ENCODE measurements at regions of chr19 and their contacts with region 1.

Region 1: GRCh38 chr19:49127674-49128544 is 8.6 kb downstream of the PPFIA3 start:
- DNase-seq: peak; percentile 91 to 95 (median 94)
- H3K4me3 ChIP-seq: peak overlapping the region; percentile 73
- H3K4me3 Mint-ChIP-seq: peak overlapping the region; percentile 64 to 93 (median 91)
- H3K27ac ChIP-seq: peak overlapping the region; percentile 59
- H3K27ac Mint-ChIP-seq: peak overlapping the region in 7 of 8 donors; percentile 8 to 92 (median 89)
- H3K4me1 ChIP-seq: peaks cover 12% of the 10 kb centered on the region
- H3K4me1 Mint-ChIP-seq: peaks cover 11 to 19% (median 17%) of the 10 kb centered on the region in 3 donors
- H3K27me3 ChIP-seq: no peaks in the 10 kb centered on the region
- H3K27me3 Mint-ChIP-seq: peaks cover 0 to 3% of the 10 kb centered on the region in 2 donors

Region 2: GRCh38 chr19:49113762-49114629 is 13.9 kb before region 1 on chr19 and contains the start of gene LIN7B:
- CTCF ChIA-PET with region 1: interaction called, 16 read pairs
- POLR2A ChIA-PET with region 1: interaction called, 15 read pairs
- DNase-seq: peak; percentile 72 to 83 (median 82)
- H3K4me3 ChIP-seq: peak within 1 kb of the TSS; percentile 62
- H3K4me3 Mint-ChIP-seq: peak within 1 kb of the TSS; percentile 82 to 91 (median 87)
- H3K27ac ChIP-seq: peak within 1 kb of the TSS; percentile 47
- H3K27ac Mint-ChIP-seq: peak within 1 kb of the TSS; percentile 60 to 93 (median 86)
- H3K4me1 ChIP-seq: peaks cover 18% of the 10 kb centered on the region
- H3K4me1 Mint-ChIP-seq: peaks cover 34 to 47% (median 41%) of the 10 kb centered on the region in 3 donors
- H3K27me3 ChIP-seq: no peaks in the 10 kb centered on the region
- H3K27me3 Mint-ChIP-seq: no peaks in the 10 kb centered on the region
- total RNA-seq, gene LIN7B: 4.0 to 5.1 TPM

Region 3: DNA sequence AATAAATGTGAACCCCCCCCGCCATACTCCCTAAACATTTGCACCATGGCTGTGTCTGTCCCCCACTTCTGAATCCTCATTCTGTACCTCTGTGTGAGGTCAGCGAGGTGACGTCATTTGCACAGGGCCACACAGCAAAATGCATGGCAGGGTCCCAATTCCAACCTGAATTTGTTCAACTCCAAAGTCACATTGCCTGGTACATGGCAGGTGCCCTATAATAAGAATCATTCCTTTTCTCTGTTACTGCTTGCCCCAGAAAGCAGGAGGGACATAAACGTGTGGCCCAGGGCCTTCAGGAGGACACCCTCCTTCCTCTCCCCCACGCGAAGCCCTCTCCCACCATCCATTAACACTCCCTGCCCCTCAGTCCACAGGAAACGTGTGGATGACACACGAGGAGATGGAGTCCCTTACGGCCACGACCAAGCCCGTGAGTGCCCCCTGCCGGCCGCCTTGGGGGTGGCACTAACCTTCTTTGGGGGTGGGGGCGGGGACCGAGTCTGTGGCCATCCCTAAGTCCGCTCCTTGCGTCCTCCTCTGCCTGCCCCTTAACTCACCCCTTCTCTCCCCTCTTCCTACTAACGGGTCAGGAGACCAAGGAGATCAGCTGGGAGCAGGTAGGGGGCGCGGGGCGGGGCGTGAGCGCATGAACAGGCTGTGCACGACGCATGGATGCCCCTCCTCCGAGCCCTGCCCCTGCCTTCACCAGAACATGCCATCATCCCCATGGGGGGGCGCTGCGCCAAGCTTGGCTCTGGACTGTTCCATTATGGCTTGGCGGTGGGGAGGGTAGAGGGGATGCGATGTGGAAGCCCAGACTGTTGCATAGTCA is 17.9 kb after region 1 on chr19:
- CTCF ChIA-PET with region 1: interaction called, 13 read pairs
- POLR2A ChIA-PET with region 1: no interaction called
- DNase-seq: peak; percentile 57 to 81 (median 72)
- H3K4me3 ChIP-seq: no peak overlapping the region
- H3K4me3 Mint-ChIP-seq: peak overlapping the region in 2 of 7 donors; percentile 13 to 82
- H3K27ac ChIP-seq: no peak overlapping the region
- H3K27ac Mint-ChIP-seq: no peak overlapping the region
- H3K4me1 ChIP-seq: peaks cover 32% of the 10 kb centered on the region
- H3K4me1 Mint-ChIP-seq: peaks cover 30 to 39% (median 32%) of the 10 kb centered on the region in 3 donors
- H3K27me3 ChIP-seq: peaks cover 33% of the 10 kb centered on the region
- H3K27me3 Mint-ChIP-seq: peaks cover 34 to 58% of the 10 kb centered on the region in 2 donors

Region 4: GRCh38 chr19:49157445-49158224 is 29.7 kb after region 1 on chr19 and contains the start of gene TRPM4:
- CTCF ChIA-PET with region 1: no interaction called
- POLR2A ChIA-PET with region 1: no interaction called
- DNase-seq: peak in 2 of 5 donors; percentile 8 to 20
- H3K4me3 ChIP-seq: no peak within 1 kb of the TSS
- H3K4me3 Mint-ChIP-seq: peak within 1 kb of the TSS in 4 of 7 donors; percentile 50 to 79 (median 60)
- H3K27ac ChIP-seq: peak within 1 kb of the TSS; percentile 64
- H3K27ac Mint-ChIP-seq: peak within 1 kb of the TSS in 1 of 8 donors; percentile 15
- H3K4me1 ChIP-seq: peaks cover 9% of the 10 kb centered on the region
- H3K4me1 Mint-ChIP-seq: peaks cover 4 to 10% (median 7%) of the 10 kb centered on the region in 3 donors
- H3K27me3 ChIP-seq: peaks cover 14% of the 10 kb centered on the region
- H3K27me3 Mint-ChIP-seq: peaks cover 31 to 68% of the 10 kb centered on the region in 2 donors
- total RNA-seq, gene TRPM4: not detected

Region 5: GRCh38 chr19:49168421-49168820 is 40.5 kb after region 1 on chr19:
- CTCF ChIA-PET with region 1: no interaction called
- POLR2A ChIA-PET with region 1: no interaction called
- DNase-seq: no peak
- H3K4me3 ChIP-seq: no peak overlapping the region
- H3K4me3 Mint-ChIP-seq: no peak overlapping the region
- H3K27ac ChIP-seq: no peak overlapping the region
- H3K27ac Mint-ChIP-seq: no peak overlapping the region
- H3K4me1 ChIP-seq: no peaks in the 10 kb centered on the region
- H3K4me1 Mint-ChIP-seq: no peaks in the 10 kb centered on the region
- H3K27me3 ChIP-seq: no peaks in the 10 kb centered on the region
- H3K27me3 Mint-ChIP-seq: peaks cover 7 to 27% of the 10 kb centered on the region in 2 donors